HCT116 (cell line): ENCODE measurements at regions of chr20 and their contacts with region 1.

Region 1: DNA sequence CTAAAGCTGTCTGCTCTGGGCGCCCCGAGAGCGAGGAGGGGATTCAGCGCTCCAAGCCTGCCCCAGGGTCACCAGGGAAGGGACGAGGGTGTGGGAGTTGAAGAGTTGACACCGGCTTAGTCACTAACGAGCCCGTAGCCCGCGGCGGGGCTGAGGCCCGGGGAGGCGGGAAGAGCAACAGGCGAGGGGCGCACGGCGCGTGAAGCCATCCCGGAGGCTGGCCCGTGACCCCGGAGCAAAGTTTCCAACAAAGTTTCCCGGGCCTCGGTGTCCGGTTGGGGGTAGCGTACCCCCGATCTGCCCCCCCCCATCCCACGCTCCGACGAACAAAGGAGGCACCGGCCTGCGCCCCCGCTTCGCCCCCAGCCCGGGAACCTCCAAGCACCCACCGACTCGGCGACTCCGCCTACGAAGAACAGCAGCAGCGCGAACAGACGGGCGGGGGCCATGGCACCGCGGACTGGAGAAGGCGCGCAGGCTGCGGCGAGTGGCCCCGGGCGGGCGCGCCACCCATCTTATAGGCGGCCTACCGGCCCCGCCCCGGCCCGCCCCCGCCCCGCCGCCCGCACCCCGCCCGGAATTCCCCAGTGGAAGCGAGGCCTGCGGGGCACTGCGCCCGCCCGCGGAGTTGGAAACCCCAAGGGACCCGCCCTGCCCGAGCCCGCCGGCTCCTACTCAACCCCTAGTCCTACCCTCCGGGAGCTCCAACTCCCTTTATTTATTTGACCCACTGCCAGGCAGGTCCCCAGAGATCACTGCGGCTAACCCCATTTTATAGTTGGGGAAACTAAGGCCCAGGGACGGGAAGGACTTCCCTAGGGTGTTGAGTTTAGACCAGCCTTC is at the start of gene SDC4:
- DNase-seq: no peak
- ATAC-seq: peak; percentile 71
- H3K4me3 ChIP-seq: peak within 1 kb of the TSS; percentile 82 to 84
- H3K27ac ChIP-seq: peak within 1 kb of the TSS; percentile 82
- H3K4me1 ChIP-seq: peaks cover 47 to 54% of the 10 kb centered on the region in 2 experiments
- H3K27me3 ChIP-seq: no peaks in the 10 kb centered on the region
- CTCF ChIP-seq: no peak
- POLR2A ChIP-seq: peak; percentile 90
- RAD21 ChIP-seq: no peak
- total RNA-seq, gene SDC4: 100 TPM

Region 2: GRCh38 chr20:43681468-43681942 is 1666.7 kb before region 1 on chr20:
- CTCF ChIA-PET with region 1: no interaction called
- POLR2A ChIA-PET with region 1: no interaction called
- RAD21 ChIA-PET with region 1: no interaction called
- intact Hi-C with region 1: no loop called
- DNase-seq: no peak
- ATAC-seq: no peak
- H3K4me3 ChIP-seq: no peak overlapping the region
- H3K27ac ChIP-seq: no peak overlapping the region
- H3K4me1 ChIP-seq: no peaks in the 10 kb centered on the region
- H3K27me3 ChIP-seq: no peaks in the 10 kb centered on the region
- CTCF ChIP-seq: peak in 1 of 3 experiments; percentile 19; a peak in 1 of 6 replicates
- POLR2A ChIP-seq: no peak
- RAD21 ChIP-seq: no peak

Region 3: DNA sequence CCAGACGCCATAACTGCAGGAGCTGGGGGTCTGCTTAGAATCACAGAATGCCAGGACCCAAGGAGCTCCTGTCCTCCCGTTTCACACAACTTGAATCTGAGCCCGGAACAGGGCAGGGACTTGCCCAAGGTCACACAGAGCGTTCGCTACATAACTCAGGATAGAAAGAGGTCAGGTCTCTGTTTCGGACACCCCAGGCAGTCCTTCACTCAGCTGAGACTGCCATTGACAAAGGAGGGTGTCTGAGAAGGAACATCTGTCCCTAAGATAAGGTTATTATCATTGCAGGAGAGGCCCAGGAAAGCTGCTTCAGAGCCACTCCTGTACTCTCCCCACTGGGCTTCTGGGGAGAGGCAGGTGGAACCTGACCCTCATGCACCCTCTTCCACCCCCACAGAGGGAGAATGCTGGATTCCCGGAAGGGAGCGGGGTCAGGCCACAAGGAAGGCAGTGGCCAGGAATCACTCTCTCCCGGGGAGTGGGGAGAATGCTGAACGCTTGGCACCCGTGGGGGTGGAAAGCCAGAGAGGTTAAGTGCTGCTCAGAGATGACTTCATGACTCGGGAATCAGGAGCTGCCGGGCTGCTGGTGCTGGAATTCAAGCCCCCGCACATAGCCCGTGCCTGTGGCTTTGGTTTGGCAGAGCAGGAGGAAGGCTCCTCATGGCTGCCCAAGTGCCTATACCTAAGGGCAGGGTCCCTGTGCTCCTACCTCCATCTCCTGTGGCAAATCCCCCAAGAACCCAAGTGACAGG is 10.6 kb before region 1 on chr20:
- CTCF ChIA-PET with region 1: no interaction called
- POLR2A ChIA-PET with region 1: interaction called, 24 read pairs
- RAD21 ChIA-PET with region 1: interaction called in 1 of 2 experiments, 3 read pairs
- intact Hi-C with region 1: no loop called
- DNase-seq: no peak
- ATAC-seq: peak; percentile 60
- H3K4me3 ChIP-seq: peak overlapping the region; percentile 2 to 45
- H3K27ac ChIP-seq: peak overlapping the region; percentile 84
- H3K4me1 ChIP-seq: peaks cover 62 to 73% of the 10 kb centered on the region in 2 experiments
- H3K27me3 ChIP-seq: no peaks in the 10 kb centered on the region
- CTCF ChIP-seq: no peak
- POLR2A ChIP-seq: no peak
- RAD21 ChIP-seq: no peak

Region 4: GRCh38 chr20:45362804-45363610 is 14.8 kb after region 1 on chr20 and contains the start of gene SYS1:
- CTCF ChIA-PET with region 1: interaction called, 11 read pairs
- POLR2A ChIA-PET with region 1: interaction called, 55 read pairs
- RAD21 ChIA-PET with region 1: interaction called in 1 of 2 experiments, 3 read pairs
- intact Hi-C with region 1: no loop called
- DNase-seq: peak; percentile 96
- ATAC-seq: peak; percentile 85
- H3K4me3 ChIP-seq: peak within 1 kb of the TSS; percentile 72 to 98
- H3K27ac ChIP-seq: peak within 1 kb of the TSS; percentile 80
- H3K4me1 ChIP-seq: peaks cover 40 to 50% of the 10 kb centered on the region in 2 experiments
- H3K27me3 ChIP-seq: no peaks in the 10 kb centered on the region
- CTCF ChIP-seq: peak; percentile 73 to 83 (median 79)
- POLR2A ChIP-seq: peak; percentile 76
- RAD21 ChIP-seq: peak; percentile 80
- total RNA-seq, gene SYS1: 20.5 TPM